ENCODE measurements at regions of chr19 and their contacts with region 1.

Region 1: GRCh38 chr19:37506387-37507166 is at the start of gene ZNF793:
- DNase-seq: peak; percentile 65 to 93 (median 82)
- ATAC-seq: peak; percentile 88 to 89
- H3K4me3 Mint-ChIP-seq: no peak within 1 kb of the TSS
- H3K27ac Mint-ChIP-seq: no peak within 1 kb of the TSS
- H3K4me1 Mint-ChIP-seq: no peaks in the 10 kb centered on the region
- H3K27me3 Mint-ChIP-seq: no peaks in the 10 kb centered on the region
- polyA plus RNA-seq, gene ZNF793: 2.7 to 4.4 (median 2.8) TPM

Region 2: DNA sequence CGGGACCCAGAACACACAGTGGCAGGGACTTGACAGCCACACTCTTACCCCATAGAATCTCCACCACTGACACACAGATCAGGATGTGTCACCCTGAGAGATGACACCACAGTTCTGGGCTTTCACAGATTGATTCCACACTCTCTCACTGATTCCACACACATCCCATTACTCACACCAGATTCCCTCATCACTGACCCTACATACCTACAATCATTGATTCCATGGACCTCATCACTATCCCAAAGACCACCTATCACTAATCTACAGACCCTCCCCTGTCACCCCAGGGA is 193.3 kb before region 1 on chr19:
- POLR2A ChIA-PET with region 1: interaction called, 15 read pairs
- DNase-seq: no peak
- ATAC-seq: no peak
- H3K4me3 Mint-ChIP-seq: peak overlapping the region; percentile 39 to 90 (median 85)
- H3K27ac Mint-ChIP-seq: peak overlapping the region; percentile 29 to 94 (median 84)
- H3K4me1 Mint-ChIP-seq: peaks cover 10 to 24% (median 19%) of the 10 kb centered on the region in 4 donors
- H3K27me3 Mint-ChIP-seq: peaks cover 0 to 19% (median 10%) of the 10 kb centered on the region in 5 donors

Region 3: GRCh38 chr19:37370880-37371661 is 135.5 kb before region 1 on chr19 and contains the start of gene ZNF527:
- POLR2A ChIA-PET with region 1: interaction called, 17 read pairs
- DNase-seq: peak; percentile 92 to 98 (median 96)
- ATAC-seq: peak; percentile 95 to 96
- H3K4me3 Mint-ChIP-seq: peak within 1 kb of the TSS; percentile 96 to 100 (median 99)
- H3K27ac Mint-ChIP-seq: peak within 1 kb of the TSS; percentile 78 to 99 (median 98)
- H3K4me1 Mint-ChIP-seq: peaks cover 16 to 27% (median 17%) of the 10 kb centered on the region in 4 donors
- H3K27me3 Mint-ChIP-seq: no peaks in the 10 kb centered on the region
- polyA plus RNA-seq, gene ZNF527: 8.7 to 13.1 (median 10.9) TPM

Region 4: DNA sequence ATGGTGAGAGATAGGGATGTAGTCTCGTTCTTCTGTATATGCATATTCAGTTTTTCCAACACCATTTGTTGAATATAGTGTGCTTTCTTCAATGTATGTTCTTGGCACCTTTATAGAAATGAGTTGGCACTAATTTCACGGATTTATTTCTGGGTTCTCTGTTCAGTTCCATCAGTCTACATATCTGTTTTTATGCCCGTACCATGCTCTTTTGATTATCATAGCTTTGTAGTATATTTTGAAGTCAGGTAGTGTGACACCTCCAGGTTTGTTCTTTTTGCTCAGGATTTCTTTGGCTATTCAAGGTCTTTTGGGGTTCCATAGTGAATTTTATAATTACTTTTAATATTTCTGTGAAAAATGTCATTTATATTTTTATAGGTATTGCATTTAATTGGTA is 14.4 kb before region 1 on chr19:
- POLR2A ChIA-PET with region 1: no interaction called
- DNase-seq: no peak
- ATAC-seq: no peak
- H3K4me3 Mint-ChIP-seq: no peak overlapping the region
- H3K27ac Mint-ChIP-seq: no peak overlapping the region
- H3K4me1 Mint-ChIP-seq: no peaks in the 10 kb centered on the region
- H3K27me3 Mint-ChIP-seq: no peaks in the 10 kb centered on the region

Region 5: GRCh38 chr19:37594304-37594981 is 87.9 kb after region 1 on chr19 and contains the starts of genes ZNF540 and ZNF571:
- POLR2A ChIA-PET with region 1: interaction called, 32 read pairs
- DNase-seq: peak; percentile 83 to 96 (median 91)
- ATAC-seq: peak; percentile 91 to 94
- H3K4me3 Mint-ChIP-seq: peak within 1 kb of the TSS; percentile 93 to 99 (median 98)
- H3K27ac Mint-ChIP-seq: peak within 1 kb of the TSS; percentile 96 to 100 (median 98)
- H3K4me1 Mint-ChIP-seq: peaks cover 31 to 41% (median 33%) of the 10 kb centered on the region in 4 donors
- H3K27me3 Mint-ChIP-seq: peaks cover 0 to 3% (median 0%) of the 10 kb centered on the region in 5 donors
- polyA plus RNA-seq, gene ZNF540: 6.6 to 9.1 (median 9.0) TPM
- polyA plus RNA-seq, gene ZNF571: 5.5 to 10.7 (median 6.6) TPM

Region 6: GRCh38 chr19:37779127-37780005 is 272.8 kb after region 1 on chr19 and contains the start of gene ZNF573:
- POLR2A ChIA-PET with region 1: interaction called, 11 read pairs
- DNase-seq: peak; percentile 67 to 97 (median 94)
- ATAC-seq: peak; percentile 86 to 90
- H3K4me3 Mint-ChIP-seq: peak within 1 kb of the TSS; percentile 91 to 100 (median 95)
- H3K27ac Mint-ChIP-seq: peak within 1 kb of the TSS; percentile 96 to 100 (median 98)
- H3K4me1 Mint-ChIP-seq: peaks cover 18 to 51% (median 41%) of the 10 kb centered on the region in 4 donors
- H3K27me3 Mint-ChIP-seq: peaks cover 0 to 3% (median 0%) of the 10 kb centered on the region in 5 donors
- polyA plus RNA-seq, gene ZNF573: 6.7 to 14.0 (median 13.6) TPM